ENCODE measurements at regions of chr2 and their contacts with region 1.

Region 1: DNA sequence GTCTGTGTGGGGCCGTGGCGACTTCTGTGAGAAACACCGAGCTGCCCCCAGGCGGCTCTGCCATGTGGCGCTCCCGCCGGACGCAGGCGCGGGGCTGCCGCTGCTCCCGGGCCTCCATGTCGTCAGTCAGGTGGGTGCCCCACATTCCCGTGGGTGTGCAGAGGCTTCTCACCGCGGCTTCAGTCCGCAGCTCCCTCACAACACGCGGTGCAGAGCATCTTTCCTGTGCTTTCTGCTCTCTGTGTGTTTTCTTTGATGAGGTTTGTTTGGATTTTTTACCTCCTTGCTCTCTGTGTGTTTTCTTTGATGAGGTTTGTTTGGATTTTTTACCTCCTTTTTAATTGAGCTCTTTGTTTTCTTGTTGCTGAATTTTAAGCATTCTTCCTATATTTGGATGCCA is 13.0 kb downstream of the AQP12A start:
- DNase-seq: no peak
- H3K4me3 ChIP-seq: no peak overlapping the region
- H3K27ac ChIP-seq: no peak overlapping the region
- H3K4me1 ChIP-seq: no peaks in the 10 kb centered on the region
- H3K27me3 ChIP-seq: no peaks in the 10 kb centered on the region
- CTCF ChIP-seq: no peak
- POLR2A ChIP-seq: no peak

Region 2: DNA sequence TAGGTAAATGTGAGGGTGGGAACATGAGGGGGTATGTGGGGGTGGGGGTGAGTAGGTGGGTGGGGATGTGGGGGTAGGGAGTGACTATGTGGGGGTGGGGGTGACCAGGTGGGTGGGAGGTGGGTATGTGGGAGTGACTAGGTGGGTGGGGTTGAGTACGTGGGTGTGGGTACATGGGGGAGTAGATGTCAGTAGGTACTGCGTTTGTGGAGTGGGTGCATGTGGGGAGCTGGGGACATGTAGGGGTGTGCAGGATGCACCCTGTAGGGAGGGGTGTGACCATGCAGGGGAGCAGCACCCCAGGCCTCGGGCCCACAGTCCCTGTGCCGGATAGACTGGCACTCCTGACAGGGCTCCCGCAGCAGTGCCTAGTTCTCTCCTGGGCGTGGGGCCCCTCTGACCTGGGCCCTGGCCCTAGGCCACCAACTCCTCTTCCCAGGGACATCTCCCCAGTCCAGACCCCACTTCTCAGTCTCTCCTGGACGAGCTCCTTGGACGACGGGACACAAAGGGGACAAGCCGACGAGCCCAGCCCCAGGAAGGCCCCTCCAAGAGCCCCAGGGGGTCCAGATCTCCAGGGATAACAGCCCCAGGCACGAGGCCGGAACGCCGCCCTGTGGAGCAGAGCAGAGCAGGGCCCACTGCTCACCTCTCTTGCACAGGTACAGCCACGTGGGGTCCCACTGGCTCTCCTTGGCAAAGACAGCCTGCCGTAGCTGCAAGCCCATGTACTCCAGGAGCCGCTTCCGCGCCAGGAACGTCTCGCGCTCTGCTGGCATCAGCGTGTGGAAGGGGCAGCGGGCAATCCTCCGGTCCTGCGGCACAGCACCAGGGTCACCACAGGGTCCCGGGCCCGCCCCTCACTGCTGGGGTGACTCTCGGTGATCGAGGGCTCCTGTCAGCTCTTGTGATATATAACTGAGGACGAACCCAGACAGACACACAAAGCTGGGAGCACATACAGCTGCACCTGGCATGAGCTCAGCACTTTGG is 205.0 kb before region 1 on chr2:
- intact Hi-C with region 1: loop called (anchors 10 kb)
- DNase-seq: no peak
- H3K4me3 ChIP-seq: no peak overlapping the region
- H3K27ac ChIP-seq: no peak overlapping the region
- H3K4me1 ChIP-seq: no peaks in the 10 kb centered on the region
- H3K27me3 ChIP-seq: no peaks in the 10 kb centered on the region
- CTCF ChIP-seq: no peak
- POLR2A ChIP-seq: no peak

Region 3: GRCh38 chr2:240595496-240596470 is 108.9 kb before region 1 on chr2:
- intact Hi-C with region 1: loop called (anchors 10 kb)
- DNase-seq: peak; percentile 0 to 1
- H3K4me3 ChIP-seq: no peak overlapping the region
- H3K27ac ChIP-seq: no peak overlapping the region
- H3K4me1 ChIP-seq: no peaks in the 10 kb centered on the region
- H3K27me3 ChIP-seq: no peaks in the 10 kb centered on the region
- CTCF ChIP-seq: no peak
- POLR2A ChIP-seq: no peak

Measured in thyroid gland (tissue), 4 donors.